ENCODE measurements at regions of chr5 and their contacts with region 1.

Region 1: GRCh38 chr5:107673368-107674136 is 2.8 kb upstream of the EFNA5 start:
- DNase-seq: peak; percentile 74 to 95 (median 88)

Region 2: DNA sequence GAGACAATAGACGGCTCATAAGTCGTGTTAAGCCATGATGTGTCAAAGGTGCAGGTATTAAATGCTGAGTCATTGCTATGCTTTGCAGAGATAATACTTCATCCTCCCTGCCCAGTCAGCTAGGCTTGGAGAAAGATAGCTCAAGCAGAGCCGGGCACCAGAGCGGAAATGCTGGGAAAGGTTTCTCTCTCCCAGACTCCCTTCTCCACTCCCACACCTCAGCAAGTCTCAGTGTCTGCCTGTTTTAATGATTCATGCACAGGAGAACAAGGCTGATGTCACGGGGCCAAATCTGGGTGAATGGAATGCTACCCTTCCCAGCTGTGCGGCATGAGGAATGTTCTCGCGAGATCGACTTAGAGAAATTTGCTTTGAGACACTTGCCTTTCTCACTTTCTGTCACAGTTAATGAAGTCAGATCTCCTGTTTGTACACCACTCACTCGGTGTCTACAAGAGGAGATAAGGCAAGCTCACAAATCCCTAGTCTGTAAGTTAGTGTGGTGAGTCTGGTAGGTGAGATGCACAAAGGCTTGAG is 207.3 kb before region 1 on chr5:
- intact Hi-C with region 1: no loop called
- DNase-seq: peak in 41 of 42 donors; percentile 20 to 86 (median 54)

Region 3: DNA sequence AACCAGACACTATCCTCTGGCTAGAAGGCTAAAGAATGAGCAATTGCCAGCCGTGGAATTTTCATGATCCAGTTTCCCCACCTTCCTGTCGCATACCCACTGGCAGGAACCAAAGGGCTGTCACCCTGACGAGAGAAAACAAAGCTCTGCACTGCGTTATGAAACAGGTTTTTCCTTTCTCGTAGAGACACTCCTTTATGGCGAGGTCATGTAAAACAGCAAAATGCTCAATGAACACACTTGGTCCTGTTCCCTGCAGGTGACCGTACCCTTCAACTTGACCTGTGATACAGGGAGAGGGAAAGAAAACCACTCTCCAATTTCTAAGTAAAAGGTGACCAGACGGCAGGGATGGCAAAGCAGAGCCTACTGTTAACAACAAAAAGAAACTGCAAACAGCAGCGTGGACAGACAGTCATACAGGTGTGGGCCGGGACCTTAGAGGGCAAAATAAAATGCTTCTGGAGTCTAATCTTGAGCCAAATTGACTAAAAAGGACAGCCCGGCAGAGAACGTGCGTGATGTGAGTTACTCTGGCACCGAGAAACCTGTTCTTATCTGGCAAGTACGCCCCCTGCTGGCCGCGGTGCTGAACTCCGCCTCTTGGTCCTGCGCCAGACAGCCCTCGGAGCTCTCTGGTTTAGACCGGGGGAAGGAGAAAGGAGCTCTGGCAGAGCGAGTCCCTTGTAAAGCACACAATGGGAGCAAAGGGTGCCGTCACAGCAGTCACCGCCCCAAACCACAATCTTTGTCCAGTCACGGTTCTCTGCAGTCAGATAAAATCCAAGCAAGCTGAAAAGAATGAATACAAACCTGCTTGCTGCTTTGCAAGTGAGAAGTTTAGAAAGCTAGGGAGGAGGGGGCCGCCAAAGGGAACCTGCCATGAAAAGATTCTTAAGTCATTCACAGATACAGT is 101.7 kb before region 1 on chr5:
- intact Hi-C with region 1: loop called (anchors 10 kb)
- DNase-seq: peak; percentile 86 to 98 (median 94)